ENCODE measurements at regions of chr14 and their contacts with region 1.

Region 1: GRCh38 chr14:100617410-100618317 is 30.4 kb upstream of the BEGAIN start:
- DNase-seq: no peak
- H3K4me3 ChIP-seq: no peak overlapping the region
- H3K27ac ChIP-seq: no peak overlapping the region
- H3K4me1 ChIP-seq: no peaks in the 10 kb centered on the region
- CTCF ChIP-seq: no peak

Region 2: GRCh38 chr14:100341301-100342031 is 276.2 kb before region 1 on chr14:
- CTCF ChIA-PET with region 1: no interaction called
- POLR2A ChIA-PET with region 1: no interaction called
- intact Hi-C with region 1: no loop called
- DNase-seq: peak; percentile 22
- H3K4me3 ChIP-seq: no peak overlapping the region
- H3K27ac ChIP-seq: peak overlapping the region; percentile 3
- H3K4me1 ChIP-seq: peaks cover 9% of the 10 kb centered on the region
- CTCF ChIP-seq: no peak

Region 3: GRCh38 chr14:100673036-100673806 is 55.6 kb after region 1 on chr14:
- CTCF ChIA-PET with region 1: no interaction called
- POLR2A ChIA-PET with region 1: no interaction called
- intact Hi-C with region 1: no loop called
- DNase-seq: no peak
- H3K4me3 ChIP-seq: no peak overlapping the region
- H3K27ac ChIP-seq: no peak overlapping the region
- H3K4me1 ChIP-seq: no peaks in the 10 kb centered on the region
- CTCF ChIP-seq: no peak

Region 4: DNA sequence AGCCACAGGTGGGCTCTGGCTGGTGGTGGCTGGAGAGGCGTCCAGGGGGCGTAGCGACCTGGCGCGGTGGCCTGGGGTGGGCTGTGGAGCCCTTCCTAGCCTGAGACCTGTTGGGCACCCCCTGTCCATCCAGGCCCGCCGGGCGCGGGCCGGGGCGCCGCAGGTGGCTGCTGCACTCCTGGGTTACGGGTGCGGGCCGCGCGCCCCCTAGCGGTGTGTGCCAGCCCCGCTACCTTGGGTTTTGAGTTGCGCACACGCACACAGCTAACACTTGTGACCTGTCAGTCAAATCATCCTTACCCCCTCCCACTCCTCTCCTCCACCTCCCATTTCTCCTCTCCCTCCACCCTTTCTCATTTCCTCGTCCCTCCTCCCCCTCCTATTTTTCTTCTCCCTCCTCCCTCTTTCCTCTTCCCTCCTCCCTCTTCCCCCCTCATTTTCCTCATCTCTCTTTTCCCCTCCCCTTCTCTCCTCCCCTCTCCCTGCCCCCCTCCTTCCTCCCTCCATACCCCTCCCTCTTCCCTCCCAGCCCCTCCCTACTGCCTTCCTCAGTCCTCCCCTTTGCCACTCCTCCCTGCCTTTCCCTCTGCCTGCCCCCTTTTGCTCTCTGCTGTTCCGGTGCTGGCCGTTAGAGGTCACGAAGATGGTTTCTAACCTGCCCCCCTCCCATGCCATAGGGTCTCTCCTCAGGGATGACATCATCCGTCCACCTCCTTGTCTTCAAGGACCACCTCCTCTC is 210.5 kb after region 1 on chr14:
- CTCF ChIA-PET with region 1: no interaction called
- POLR2A ChIA-PET with region 1: no interaction called
- intact Hi-C with region 1: no loop called
- DNase-seq: no peak
- H3K4me3 ChIP-seq: no peak overlapping the region
- H3K27ac ChIP-seq: no peak overlapping the region
- H3K4me1 ChIP-seq: no peaks in the 10 kb centered on the region
- CTCF ChIP-seq: no peak

Region 5: DNA sequence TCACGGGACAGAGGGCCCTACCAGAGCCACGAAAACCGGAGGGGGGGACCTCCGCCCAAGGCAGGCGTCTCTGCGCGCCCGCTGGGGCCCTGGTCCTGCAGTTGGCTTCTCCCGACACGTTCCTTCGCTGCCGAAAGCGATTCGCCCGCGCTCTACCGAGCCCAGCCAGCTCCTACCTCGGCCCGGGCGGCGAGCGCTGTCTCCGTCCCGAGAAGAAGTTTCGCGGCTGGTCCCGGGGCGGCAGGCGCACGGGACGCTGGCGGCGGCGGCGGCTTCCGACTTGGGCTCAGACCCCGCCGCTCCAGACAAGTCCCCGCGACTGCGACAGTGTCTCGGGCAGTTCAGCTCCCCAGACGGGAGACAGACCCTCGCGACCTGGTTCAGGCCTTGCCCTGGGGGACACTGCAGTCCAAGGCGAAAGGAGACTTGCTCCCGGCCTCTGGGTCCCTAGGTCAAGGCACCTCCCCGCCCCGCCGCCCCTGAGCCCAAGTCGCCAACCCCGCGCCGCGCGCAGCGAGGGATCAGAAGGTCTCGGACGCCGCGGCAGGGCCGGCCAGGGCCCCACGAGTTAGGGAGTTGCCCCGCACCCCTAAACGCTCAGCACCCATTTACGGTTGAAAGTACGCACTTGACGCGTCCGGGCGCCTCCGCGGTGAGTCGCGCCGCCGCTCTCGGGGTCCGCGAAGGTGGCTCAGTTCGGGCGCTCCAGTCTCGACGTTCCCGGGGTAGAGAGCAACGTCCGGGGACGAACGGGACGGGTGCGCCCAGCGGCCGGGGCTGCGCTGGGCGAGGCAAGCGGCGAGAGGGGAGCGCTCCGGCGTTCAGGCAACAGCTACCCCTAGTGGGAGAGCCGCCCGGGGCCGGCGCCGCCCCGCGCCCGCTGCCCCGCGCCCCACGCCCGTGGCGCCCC is 942.2 kb after region 1 on chr14:
- CTCF ChIA-PET with region 1: interaction called, 15 read pairs
- POLR2A ChIA-PET with region 1: no interaction called
- intact Hi-C with region 1: no loop called
- DNase-seq: no peak
- H3K4me3 ChIP-seq: no peak overlapping the region
- H3K27ac ChIP-seq: no peak overlapping the region
- H3K4me1 ChIP-seq: peaks cover 24% of the 10 kb centered on the region
- CTCF ChIP-seq: no peak

Measured in OCI-LY7 (cell line).